ENCODE measurements at regions of chr1 and their contacts with region 1.

Region 1: GRCh38 chr1:210584439-210585113 is 255.9 kb downstream of the HHAT start:
- DNase-seq: peak; percentile 34
- ATAC-seq: peak; percentile 37
- H3K4me3 Mint-ChIP-seq: no peak overlapping the region
- H3K27ac Mint-ChIP-seq: no peak overlapping the region
- H3K4me1 Mint-ChIP-seq: peaks cover 10% of the 10 kb centered on the region
- H3K27me3 Mint-ChIP-seq: no peaks in the 10 kb centered on the region
- CTCF ChIP-seq: no peak

Region 2: DNA sequence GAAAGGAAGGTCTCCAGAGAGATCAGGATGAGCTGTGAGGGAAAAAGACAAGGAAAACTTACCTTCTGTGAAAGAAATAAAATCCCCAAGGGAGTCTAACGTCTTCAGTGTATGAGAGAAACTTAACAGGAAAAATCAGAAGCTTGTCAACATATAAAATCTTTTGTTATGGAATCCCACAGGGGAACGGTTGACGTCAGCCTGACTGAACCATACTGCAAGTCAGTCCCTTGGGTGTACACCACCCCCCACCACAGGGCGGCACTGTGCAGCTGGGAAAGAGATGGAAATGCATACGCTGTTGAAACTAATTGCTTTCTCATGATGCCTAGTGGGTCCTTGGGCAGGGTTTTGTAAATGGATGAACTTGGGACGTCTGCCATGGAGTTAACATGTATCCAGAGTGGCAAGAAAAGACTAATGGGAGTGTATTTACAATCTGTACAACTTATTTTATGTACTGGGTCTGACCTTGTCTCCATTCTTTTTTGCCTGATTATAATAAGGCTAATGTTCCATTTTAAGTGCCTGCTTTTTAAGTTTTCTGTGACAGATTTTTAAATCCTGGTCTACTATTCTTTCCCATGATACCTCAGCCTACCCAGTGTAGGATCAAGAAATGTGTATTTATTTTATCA is 734.1 kb before region 1 on chr1:
- CTCF ChIA-PET with region 1: no interaction called
- POLR2A ChIA-PET with region 1: no interaction called
- intact Hi-C with region 1: no loop called
- DNase-seq: no peak
- ATAC-seq: peak; percentile 70
- H3K4me3 Mint-ChIP-seq: no peak overlapping the region
- H3K27ac Mint-ChIP-seq: peak overlapping the region; percentile 30
- H3K4me1 Mint-ChIP-seq: peaks cover 8% of the 10 kb centered on the region
- H3K27me3 Mint-ChIP-seq: no peaks in the 10 kb centered on the region
- CTCF ChIP-seq: no peak

Region 3: DNA sequence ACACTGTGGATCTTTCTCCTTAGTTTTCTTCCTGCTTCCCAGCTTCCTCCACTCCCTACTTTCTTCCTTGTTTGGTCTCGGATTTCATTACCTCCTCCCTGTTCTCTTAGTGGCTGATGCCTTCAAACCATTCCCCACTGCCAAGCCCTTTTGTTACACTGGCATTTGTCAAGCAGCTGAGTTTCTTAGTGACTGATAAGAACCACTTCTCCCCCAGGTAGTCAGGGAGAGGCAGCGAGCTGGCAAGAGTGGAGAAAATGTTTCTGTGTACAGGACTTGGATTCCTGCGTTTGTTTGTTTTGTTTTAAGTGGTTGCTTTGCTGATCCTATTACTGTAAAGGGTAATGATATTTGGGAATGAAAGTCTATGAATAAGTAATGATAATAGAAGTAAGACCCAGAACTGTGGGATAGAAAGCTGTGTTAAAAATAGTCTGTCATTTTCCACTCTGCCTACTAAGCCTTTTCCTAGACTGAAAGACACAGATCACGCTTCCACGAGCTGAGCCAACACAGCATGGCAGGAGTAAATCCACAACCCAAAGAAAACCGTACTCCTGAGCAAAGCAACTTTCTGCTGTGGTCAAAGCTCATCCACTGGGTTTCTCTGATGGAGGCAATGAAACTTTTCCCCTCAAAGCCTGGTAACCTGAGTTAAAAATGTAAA is 362.1 kb before region 1 on chr1:
- CTCF ChIA-PET with region 1: no interaction called
- POLR2A ChIA-PET with region 1: no interaction called
- intact Hi-C with region 1: no loop called
- DNase-seq: no peak
- ATAC-seq: no peak
- H3K4me3 Mint-ChIP-seq: no peak overlapping the region
- H3K27ac Mint-ChIP-seq: no peak overlapping the region
- H3K4me1 Mint-ChIP-seq: no peaks in the 10 kb centered on the region
- H3K27me3 Mint-ChIP-seq: peaks cover 14% of the 10 kb centered on the region
- CTCF ChIP-seq: no peak

Region 4: GRCh38 chr1:210951279-210951678 is 366.7 kb after region 1 on chr1:
- CTCF ChIA-PET with region 1: no interaction called
- POLR2A ChIA-PET with region 1: no interaction called
- intact Hi-C with region 1: loop called (anchors 5 kb)
- DNase-seq: no peak
- ATAC-seq: no peak
- H3K4me3 Mint-ChIP-seq: no peak overlapping the region
- H3K27ac Mint-ChIP-seq: no peak overlapping the region
- H3K4me1 Mint-ChIP-seq: no peaks in the 10 kb centered on the region
- H3K27me3 Mint-ChIP-seq: no peaks in the 10 kb centered on the region
- CTCF ChIP-seq: no peak

Region 5: GRCh38 chr1:211352985-211353515 is 768.5 kb after region 1 on chr1:
- CTCF ChIA-PET with region 1: no interaction called
- POLR2A ChIA-PET with region 1: no interaction called
- intact Hi-C with region 1: loop called (anchors 10 kb)
- DNase-seq: no peak
- ATAC-seq: peak; percentile 83
- H3K4me3 Mint-ChIP-seq: peak overlapping the region; percentile 55
- H3K27ac Mint-ChIP-seq: peak overlapping the region; percentile 94
- H3K4me1 Mint-ChIP-seq: peaks cover 60% of the 10 kb centered on the region
- H3K27me3 Mint-ChIP-seq: no peaks in the 10 kb centered on the region
- CTCF ChIP-seq: no peak